ENCODE measurements at regions of chr6 and their contacts with region 1.

Region 1: DNA sequence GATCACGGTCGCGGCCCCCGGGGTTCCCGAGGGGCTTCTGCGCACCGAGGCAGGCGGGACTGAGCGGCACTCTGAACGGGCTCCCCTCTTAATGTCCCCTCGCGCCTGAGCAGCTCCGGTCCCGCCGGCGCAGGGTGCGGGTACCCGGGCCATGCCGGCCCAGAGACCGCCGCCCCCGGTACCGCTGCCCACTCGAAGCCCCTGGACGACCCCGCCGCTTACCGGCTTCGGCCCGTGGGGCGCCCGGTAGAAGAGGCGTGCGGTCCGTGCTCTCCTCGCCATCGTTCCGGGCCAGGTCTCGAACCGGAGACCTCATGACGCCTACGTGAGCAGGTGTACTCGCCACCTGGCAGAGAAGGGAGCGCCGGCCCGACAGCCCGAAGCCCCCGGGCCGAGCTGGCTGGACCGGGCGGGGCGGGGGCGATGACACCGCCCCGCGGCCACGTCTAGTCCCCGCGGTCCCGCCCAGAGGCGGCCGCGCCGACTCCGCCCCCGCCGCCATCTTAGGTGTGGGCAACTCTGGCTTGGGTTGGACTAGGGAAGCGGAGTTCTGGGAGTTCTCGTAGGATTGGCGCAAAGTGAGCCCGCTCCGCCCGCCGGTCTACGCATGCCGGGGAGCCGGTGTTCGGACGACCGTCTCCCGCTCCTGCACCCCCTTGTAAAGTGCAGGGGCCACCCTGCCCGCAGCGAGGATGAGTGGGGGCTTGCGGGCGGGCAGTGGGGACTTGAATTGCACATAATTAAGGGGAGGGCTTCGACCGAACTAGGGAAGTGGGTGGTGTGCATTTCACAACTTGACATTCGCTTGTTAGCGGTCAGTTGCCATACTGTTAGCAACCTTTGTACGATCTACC is at the start of gene SLC17A5:
- DNase-seq: peak; percentile 57
- ATAC-seq: peak; percentile 95
- H3K4me3 ChIP-seq: peak within 1 kb of the TSS; percentile 83
- H3K27ac ChIP-seq: peak within 1 kb of the TSS; percentile 86
- H3K4me1 ChIP-seq: no peaks in the 10 kb centered on the region
- H3K27me3 ChIP-seq: no peaks in the 10 kb centered on the region
- CTCF ChIP-seq: no peak
- EP300 ChIP-seq: 0 out of 4 replicates have a peak, but pooled peaks of 1 of the 2 experiments have one; percentile 6
- POLR2A ChIP-seq: peak; percentile 78
- RAD21 ChIP-seq: no peak
- polyA plus RNA-seq, gene SLC17A5: 2.3 to 2.7 TPM

Region 2: DNA sequence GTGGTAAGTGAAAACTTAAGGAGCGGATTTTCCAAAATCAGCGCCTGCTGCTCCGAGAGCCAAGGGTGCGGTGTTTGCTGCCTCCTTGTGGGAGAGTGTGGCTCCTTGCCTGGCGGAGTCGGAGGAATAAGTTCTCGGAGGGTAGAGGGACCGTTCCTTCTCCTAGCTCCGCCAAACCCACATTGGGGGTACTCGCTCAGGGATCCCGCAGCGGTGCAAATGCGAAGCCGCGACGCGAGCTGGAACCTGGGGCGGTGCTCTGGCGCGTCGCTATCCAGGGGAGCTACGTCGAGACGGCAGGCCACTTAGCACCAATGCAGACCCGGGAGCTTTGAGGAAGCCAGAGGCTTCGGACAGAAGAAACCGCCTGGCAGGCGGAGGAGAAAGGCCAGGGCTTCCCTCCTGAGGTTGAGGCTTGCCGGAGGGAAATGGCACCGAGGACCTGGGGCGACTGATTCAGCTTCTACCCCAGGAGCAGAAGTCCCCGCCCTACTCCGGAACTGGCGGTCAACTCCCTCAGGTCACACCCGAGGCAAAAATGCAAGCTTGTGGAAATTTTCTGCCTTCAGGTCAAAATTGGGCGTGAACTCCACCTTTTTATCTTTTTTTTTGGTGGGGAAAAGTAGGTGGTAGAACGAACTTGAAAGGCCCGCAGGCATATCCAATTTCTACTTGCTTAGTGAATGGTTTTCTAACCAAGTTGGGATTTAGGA is 264.8 kb before region 1 on chr6:
- CTCF ChIA-PET with region 1: interaction called, 8 read pairs
- POLR2A ChIA-PET with region 1: no interaction called
- RAD21 ChIA-PET with region 1: interaction called, 4 read pairs
- SMC1A ChIA-PET with region 1: interaction called, 4 read pairs
- in situ Hi-C with region 1: no loop called
- intact Hi-C with region 1: loop called (anchors 5 kb)
- DNase-seq: no peak
- ATAC-seq: peak; percentile 92
- H3K4me3 ChIP-seq: peak overlapping the region; percentile 51
- H3K27ac ChIP-seq: no peak overlapping the region
- H3K4me1 ChIP-seq: no peaks in the 10 kb centered on the region
- H3K27me3 ChIP-seq: no peaks in the 10 kb centered on the region
- CTCF ChIP-seq: peak; percentile 60 to 80 (median 65)
- EP300 ChIP-seq: no peak
- POLR2A ChIP-seq: peak; percentile 33; the same call in 1 of the 2 replicates
- RAD21 ChIP-seq: peak; percentile 65

Region 3: GRCh38 chr6:73461537-73462350 is 192.1 kb before region 1 on chr6 and contains the start of gene MTO1:
- CTCF ChIA-PET with region 1: interaction called, 8 read pairs
- POLR2A ChIA-PET with region 1: interaction called, 16 read pairs
- RAD21 ChIA-PET with region 1: interaction called, 8 read pairs
- SMC1A ChIA-PET with region 1: no interaction called
- in situ Hi-C with region 1: no loop called
- intact Hi-C with region 1: no loop called
- DNase-seq: no peak
- ATAC-seq: peak; percentile 96
- H3K4me3 ChIP-seq: peak within 1 kb of the TSS; percentile 92
- H3K27ac ChIP-seq: peak within 1 kb of the TSS; percentile 87
- H3K4me1 ChIP-seq: peaks cover 10% of the 10 kb centered on the region
- H3K27me3 ChIP-seq: no peaks in the 10 kb centered on the region
- CTCF ChIP-seq: no peak
- EP300 ChIP-seq: no peak
- POLR2A ChIP-seq: peak; percentile 89
- RAD21 ChIP-seq: no peak
- polyA plus RNA-seq, gene MTO1: 24.8 to 28.0 TPM

Region 4: DNA sequence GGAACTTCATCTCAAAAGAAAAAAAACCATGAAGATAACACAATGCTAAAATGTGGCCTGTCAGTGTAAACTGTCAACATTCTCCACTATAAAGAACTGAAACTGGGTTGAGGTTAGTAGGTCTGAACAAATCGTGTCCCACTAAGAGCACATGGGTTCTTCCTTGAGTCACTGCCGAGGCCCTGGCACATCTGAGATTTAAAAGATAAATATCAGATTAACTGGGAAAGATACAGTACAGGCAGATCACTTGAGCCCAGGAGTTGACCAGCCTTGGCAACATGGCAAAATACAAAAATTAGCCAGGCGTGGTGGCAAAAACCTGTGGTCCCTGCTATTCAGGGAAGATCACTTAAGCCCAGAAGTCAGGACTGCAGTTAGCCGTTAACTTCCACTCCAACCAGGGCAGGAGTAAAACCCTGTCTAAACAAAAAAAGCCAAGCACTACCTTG is 138.6 kb before region 1 on chr6:
- CTCF ChIA-PET with region 1: interaction called, 14 read pairs
- POLR2A ChIA-PET with region 1: interaction called, 24 read pairs
- RAD21 ChIA-PET with region 1: interaction called, 18 read pairs
- SMC1A ChIA-PET with region 1: interaction called, 31 read pairs
- in situ Hi-C with region 1: loop called (anchors 5 kb)
- intact Hi-C with region 1: loop called (anchors 1 kb)
- DNase-seq: no peak
- ATAC-seq: peak; percentile 54
- H3K4me3 ChIP-seq: no peak overlapping the region
- H3K27ac ChIP-seq: peak overlapping the region; percentile 73
- H3K4me1 ChIP-seq: peaks cover 17% of the 10 kb centered on the region
- H3K27me3 ChIP-seq: no peaks in the 10 kb centered on the region
- CTCF ChIP-seq: no peak
- EP300 ChIP-seq: peak in 1 of 2 experiments; percentile 35; a peak in 1 of 4 replicates
- POLR2A ChIP-seq: peak; percentile 66; the same call in 1 of the 2 replicates
- RAD21 ChIP-seq: no peak

Region 5: GRCh38 chr6:73610444-73611275 is 43.1 kb before region 1 on chr6:
- CTCF ChIA-PET with region 1: interaction called, 10 read pairs
- POLR2A ChIA-PET with region 1: interaction called, 4 read pairs
- RAD21 ChIA-PET with region 1: interaction called, 6 read pairs
- SMC1A ChIA-PET with region 1: interaction called, 8 read pairs
- in situ Hi-C with region 1: no loop called
- intact Hi-C with region 1: no loop called
- DNase-seq: peak; percentile 23
- ATAC-seq: peak; percentile 79
- H3K4me3 ChIP-seq: no peak overlapping the region
- H3K27ac ChIP-seq: no peak overlapping the region
- H3K4me1 ChIP-seq: no peaks in the 10 kb centered on the region
- H3K27me3 ChIP-seq: no peaks in the 10 kb centered on the region
- CTCF ChIP-seq: peak; percentile 37 to 66 (median 58); a peak in 5 of 6 replicates
- EP300 ChIP-seq: no peak
- POLR2A ChIP-seq: no peak
- RAD21 ChIP-seq: peak; percentile 74

Region 6: DNA sequence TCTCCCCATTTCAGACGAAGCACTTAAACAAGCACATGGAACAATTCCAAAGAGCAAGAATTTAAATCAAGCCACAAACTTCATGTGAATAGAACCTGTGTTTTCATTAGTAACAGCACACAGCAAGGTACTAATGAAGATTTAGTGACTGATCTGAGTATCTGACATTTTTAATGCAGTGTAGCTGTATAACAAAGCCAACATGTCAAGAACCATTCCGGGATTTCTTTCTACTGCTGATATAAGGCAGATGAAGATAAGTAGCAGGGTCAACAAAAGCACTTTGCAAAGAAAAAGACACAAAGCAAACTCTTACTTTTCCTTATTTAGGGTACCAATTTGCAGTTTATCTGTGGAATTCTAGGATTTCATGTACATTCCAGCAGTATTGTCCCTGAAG is 11.3 kb before region 1 on chr6:
- CTCF ChIA-PET with region 1: interaction called, 12 read pairs
- POLR2A ChIA-PET with region 1: no interaction called
- RAD21 ChIA-PET with region 1: interaction called, 4 read pairs
- SMC1A ChIA-PET with region 1: interaction called, 3 read pairs
- in situ Hi-C with region 1: no loop called
- intact Hi-C with region 1: no loop called
- DNase-seq: no peak
- ATAC-seq: no peak
- H3K4me3 ChIP-seq: no peak overlapping the region
- H3K27ac ChIP-seq: no peak overlapping the region
- H3K4me1 ChIP-seq: no peaks in the 10 kb centered on the region
- H3K27me3 ChIP-seq: no peaks in the 10 kb centered on the region
- CTCF ChIP-seq: no peak
- EP300 ChIP-seq: no peak
- POLR2A ChIP-seq: no peak
- RAD21 ChIP-seq: no peak

Region 7: GRCh38 chr6:73951183-73951582 is 297.4 kb after region 1 on chr6:
- CTCF ChIA-PET with region 1: no interaction called
- POLR2A ChIA-PET with region 1: no interaction called
- RAD21 ChIA-PET with region 1: no interaction called
- SMC1A ChIA-PET with region 1: no interaction called
- in situ Hi-C with region 1: no loop called
- intact Hi-C with region 1: no loop called
- DNase-seq: no peak
- ATAC-seq: no peak
- H3K4me3 ChIP-seq: no peak overlapping the region
- H3K27ac ChIP-seq: no peak overlapping the region
- H3K4me1 ChIP-seq: no peaks in the 10 kb centered on the region
- H3K27me3 ChIP-seq: no peaks in the 10 kb centered on the region
- CTCF ChIP-seq: no peak
- EP300 ChIP-seq: no peak
- POLR2A ChIP-seq: no peak
- RAD21 ChIP-seq: no peak

Measured in GM12878 (cell line).